Naive thymus-derived CD4-positive, alpha-beta T cell (primary cell): ENCODE measurements at regions of chr6 and their contacts with region 1.

Region 1: GRCh38 chr6:72622094-72622940 is 453 bp downstream of the KCNQ5 start:
- DNase-seq: peak; percentile 51 to 72 (median 60)
- ATAC-seq: peak; percentile 72
- H3K4me3 ChIP-seq: peak overlapping the region; percentile 82
- H3K4me3 Mint-ChIP-seq: peak overlapping the region; percentile 90 to 98 (median 94)
- H3K27ac ChIP-seq: peak overlapping the region; percentile 52
- H3K27ac Mint-ChIP-seq: peak overlapping the region; percentile 23 to 88 (median 76)
- H3K4me1 ChIP-seq: peaks cover 14 to 27% of the 10 kb centered on the region in 2 donors
- H3K4me1 Mint-ChIP-seq: peaks cover 39 to 69% (median 51%) of the 10 kb centered on the region in 7 donors
- H3K27me3 ChIP-seq: no peaks in the 10 kb centered on the region
- H3K27me3 Mint-ChIP-seq: no peaks in the 10 kb centered on the region

Region 2: DNA sequence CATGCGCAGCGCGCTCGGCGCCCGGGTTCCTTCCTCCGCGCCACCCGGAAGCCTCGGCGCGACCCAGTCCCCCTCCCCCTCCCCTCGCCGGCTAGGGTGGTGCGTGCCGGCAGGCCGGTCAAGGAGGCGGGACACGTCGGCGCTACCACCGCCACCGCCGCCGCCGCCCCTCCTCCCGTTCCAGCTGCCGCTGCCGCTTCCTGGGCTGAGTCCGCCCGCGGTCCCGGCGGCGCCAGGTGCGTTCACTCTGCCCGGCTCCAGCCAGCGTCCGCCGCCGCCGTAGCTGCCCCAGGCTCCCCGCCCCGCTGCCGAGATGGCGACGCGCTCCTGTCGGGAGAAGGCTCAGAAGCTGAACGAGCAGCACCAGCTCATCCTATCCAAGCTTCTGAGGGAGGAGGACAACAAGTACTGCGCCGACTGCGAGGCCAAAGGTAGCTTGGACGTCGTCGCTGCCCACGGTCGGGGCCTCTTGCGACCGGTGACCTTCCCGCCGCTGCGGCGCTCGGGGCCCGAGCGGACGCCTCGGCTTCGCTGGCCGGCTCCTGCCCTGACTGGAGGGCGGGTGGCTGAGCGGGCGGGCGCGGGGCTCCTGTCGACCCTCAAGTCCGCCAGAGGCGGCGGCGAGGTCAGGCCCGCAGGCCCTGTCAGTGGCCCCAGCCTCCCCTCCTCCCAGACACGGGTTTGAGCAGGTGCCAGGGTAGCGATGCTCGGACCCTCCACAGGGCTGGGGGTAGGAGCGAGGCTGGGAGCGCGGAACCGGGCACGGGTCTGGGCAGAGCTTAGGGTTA is 1954.4 kb before region 1 on chr6 and contains the start of gene SMAP1:
- CTCF ChIA-PET with region 1: no interaction called
- POLR2A ChIA-PET with region 1: no interaction called
- intact Hi-C with region 1: loop called in 1 of 2 experiments (anchors 5 kb)
- DNase-seq: peak; percentile 84 to 96 (median 90)
- ATAC-seq: peak; percentile 97
- H3K4me3 ChIP-seq: peak within 1 kb of the TSS; percentile 69
- H3K4me3 Mint-ChIP-seq: peak within 1 kb of the TSS; percentile 83 to 96 (median 90)
- H3K27ac ChIP-seq: peak within 1 kb of the TSS; percentile 82
- H3K27ac Mint-ChIP-seq: peak within 1 kb of the TSS; percentile 92 to 98 (median 95)
- H3K4me1 ChIP-seq: peaks cover 23 to 26% of the 10 kb centered on the region in 2 donors
- H3K4me1 Mint-ChIP-seq: peaks cover 40 to 58% (median 55%) of the 10 kb centered on the region in 7 donors
- H3K27me3 ChIP-seq: no peaks in the 10 kb centered on the region
- H3K27me3 Mint-ChIP-seq: no peaks in the 10 kb centered on the region
- total RNA-seq, gene SMAP1: 18.7 to 45.7 (median 20.8) TPM

Region 3: GRCh38 chr6:72522719-72523141 is 99.6 kb before region 1 on chr6:
- CTCF ChIA-PET with region 1: interaction called, 3 read pairs
- POLR2A ChIA-PET with region 1: interaction called, 4 read pairs
- intact Hi-C with region 1: loop called in 1 of 2 experiments (anchors 1 kb)
- DNase-seq: peak in 8 of 9 donors; percentile 7 to 54 (median 22)
- ATAC-seq: no peak
- H3K4me3 ChIP-seq: no peak overlapping the region
- H3K4me3 Mint-ChIP-seq: no peak overlapping the region
- H3K27ac ChIP-seq: no peak overlapping the region
- H3K27ac Mint-ChIP-seq: no peak overlapping the region
- H3K4me1 ChIP-seq: no peaks in the 10 kb centered on the region
- H3K4me1 Mint-ChIP-seq: no peaks in the 10 kb centered on the region
- H3K27me3 ChIP-seq: peaks cover 0 to 3% of the 10 kb centered on the region in 2 donors
- H3K27me3 Mint-ChIP-seq: peaks cover 0 to 13% (median 4%) of the 10 kb centered on the region in 5 donors

Region 4: GRCh38 chr6:72691249-72691648 is 68.9 kb after region 1 on chr6:
- CTCF ChIA-PET with region 1: no interaction called
- POLR2A ChIA-PET with region 1: no interaction called
- intact Hi-C with region 1: loop called in 1 of 2 experiments (anchors 5 kb)
- DNase-seq: no peak
- ATAC-seq: no peak
- H3K4me3 ChIP-seq: no peak overlapping the region
- H3K4me3 Mint-ChIP-seq: no peak overlapping the region
- H3K27ac ChIP-seq: no peak overlapping the region
- H3K27ac Mint-ChIP-seq: no peak overlapping the region
- H3K4me1 ChIP-seq: no peaks in the 10 kb centered on the region
- H3K4me1 Mint-ChIP-seq: peaks cover 0 to 2% (median 0%) of the 10 kb centered on the region in 7 donors
- H3K27me3 ChIP-seq: no peaks in the 10 kb centered on the region
- H3K27me3 Mint-ChIP-seq: no peaks in the 10 kb centered on the region

Region 5: DNA sequence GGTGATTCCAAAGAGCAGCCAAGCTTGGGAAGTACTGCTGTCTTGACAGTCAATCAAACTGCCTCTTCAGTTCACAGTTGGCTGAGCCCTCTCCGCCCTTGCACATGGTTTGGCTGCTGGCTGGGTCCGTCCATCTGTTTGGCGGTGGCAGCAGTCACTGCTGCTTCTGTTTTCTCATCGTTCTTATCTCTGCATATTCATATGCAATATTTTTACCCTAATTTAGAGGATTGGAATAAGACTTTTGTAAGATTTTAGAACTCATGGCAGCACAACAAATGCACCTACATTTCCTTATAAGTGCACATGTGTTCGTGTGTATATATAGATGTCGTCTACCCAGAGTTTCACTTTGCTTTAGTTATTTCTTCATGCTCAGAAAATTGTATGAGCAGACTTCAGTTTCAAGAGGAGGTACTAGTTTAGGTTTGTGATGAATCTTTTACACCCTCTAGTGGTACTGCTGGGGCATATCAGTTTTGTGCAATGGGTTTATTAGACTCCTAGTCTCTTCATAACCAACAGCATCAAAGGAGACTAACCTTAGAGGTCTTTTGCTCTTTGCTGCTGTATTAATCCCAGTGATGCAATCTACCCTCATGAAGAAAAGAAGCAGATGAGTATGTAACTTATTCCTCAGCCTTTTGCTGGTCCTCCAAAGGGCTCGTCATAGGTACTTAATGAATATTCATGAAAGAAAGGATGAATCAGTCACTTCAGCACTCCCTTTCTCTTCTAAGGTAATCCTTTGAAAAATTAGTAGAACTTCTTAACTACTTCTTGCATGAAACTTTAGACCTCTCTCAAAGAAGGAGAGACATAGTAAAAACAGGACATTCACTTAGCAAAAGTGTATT is 558.7 kb after region 1 on chr6:
- CTCF ChIA-PET with region 1: interaction called, 3 read pairs
- POLR2A ChIA-PET with region 1: no interaction called
- intact Hi-C with region 1: loop called in 1 of 2 experiments (anchors 2 kb)
- DNase-seq: peak in 6 of 9 donors; percentile 29 to 62 (median 44)
- ATAC-seq: peak; percentile 92
- H3K4me3 ChIP-seq: no peak overlapping the region
- H3K4me3 Mint-ChIP-seq: peak overlapping the region in 9 of 10 donors; percentile 12 to 69 (median 47)
- H3K27ac ChIP-seq: no peak overlapping the region
- H3K27ac Mint-ChIP-seq: peak overlapping the region in 1 of 9 donors; percentile 17
- H3K4me1 ChIP-seq: no peaks in the 10 kb centered on the region
- H3K4me1 Mint-ChIP-seq: peaks cover 4 to 11% (median 5%) of the 10 kb centered on the region in 7 donors
- H3K27me3 ChIP-seq: no peaks in the 10 kb centered on the region
- H3K27me3 Mint-ChIP-seq: no peaks in the 10 kb centered on the region

Region 6: GRCh38 chr6:73461537-73462350 is 839.4 kb after region 1 on chr6 and contains the start of gene MTO1:
- CTCF ChIA-PET with region 1: no interaction called
- POLR2A ChIA-PET with region 1: interaction called, 5 read pairs
- intact Hi-C with region 1: loop called in 1 of 2 experiments (anchors 5 kb)
- DNase-seq: peak; percentile 50 to 86 (median 81)
- ATAC-seq: peak; percentile 97
- H3K4me3 ChIP-seq: peak within 1 kb of the TSS; percentile 92
- H3K4me3 Mint-ChIP-seq: peak within 1 kb of the TSS; percentile 87 to 100 (median 98)
- H3K27ac ChIP-seq: peak within 1 kb of the TSS; percentile 93
- H3K27ac Mint-ChIP-seq: peak within 1 kb of the TSS; percentile 96 to 100 (median 98)
- H3K4me1 ChIP-seq: peaks cover 0 to 8% of the 10 kb centered on the region in 2 donors
- H3K4me1 Mint-ChIP-seq: peaks cover 11 to 53% (median 32%) of the 10 kb centered on the region in 7 donors
- H3K27me3 ChIP-seq: no peaks in the 10 kb centered on the region
- H3K27me3 Mint-ChIP-seq: no peaks in the 10 kb centered on the region
- total RNA-seq, gene MTO1: 43.5 to 92.0 (median 48.6) TPM

Region 7: GRCh38 chr6:73580247-73581149 is 958.2 kb after region 1 on chr6:
- CTCF ChIA-PET with region 1: no interaction called
- POLR2A ChIA-PET with region 1: no interaction called
- intact Hi-C with region 1: loop called in 1 of 2 experiments (anchors 10 kb)
- DNase-seq: peak in 8 of 9 donors; percentile 9 to 69 (median 22)
- ATAC-seq: peak; percentile 90
- H3K4me3 ChIP-seq: peak overlapping the region; percentile 20
- H3K4me3 Mint-ChIP-seq: peak overlapping the region; percentile 33 to 77 (median 73)
- H3K27ac ChIP-seq: peak overlapping the region; percentile 48
- H3K27ac Mint-ChIP-seq: peak overlapping the region; percentile 70 to 95 (median 89)
- H3K4me1 ChIP-seq: peaks cover 12 to 24% of the 10 kb centered on the region in 2 donors
- H3K4me1 Mint-ChIP-seq: peaks cover 8 to 26% (median 17%) of the 10 kb centered on the region in 7 donors
- H3K27me3 ChIP-seq: no peaks in the 10 kb centered on the region
- H3K27me3 Mint-ChIP-seq: no peaks in the 10 kb centered on the region